Calu3 (cell line): ENCODE measurements at regions of chr5 and their contacts with region 1.

Region 1: DNA sequence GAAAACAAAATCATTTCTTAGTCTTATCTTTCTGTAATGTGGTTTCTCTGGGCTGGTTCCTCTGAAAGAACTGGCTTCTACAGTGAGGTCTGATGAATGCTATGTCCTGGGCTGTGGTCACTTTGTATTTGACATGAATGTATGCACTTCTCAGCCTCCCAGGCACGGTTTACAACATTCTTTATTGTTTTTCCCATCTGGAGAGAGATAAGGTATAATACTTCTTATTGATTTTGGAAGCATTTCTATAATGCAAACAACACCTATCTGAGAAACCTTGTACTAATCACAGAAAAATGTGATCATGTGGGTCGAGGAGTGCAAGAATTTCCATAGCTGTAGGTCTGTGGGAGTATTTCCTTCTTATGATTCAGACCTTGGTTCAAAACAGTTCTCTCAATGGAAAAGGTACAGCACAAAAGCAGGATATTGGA is 46.9 kb downstream of the ACTBL2 start:
- DNase-seq: peak; percentile 60
- H3K4me3 Mint-ChIP-seq: peak overlapping the region; percentile 10
- H3K27ac Mint-ChIP-seq: peak overlapping the region; percentile 87
- H3K4me1 Mint-ChIP-seq: peaks cover 57% of the 10 kb centered on the region
- H3K27me3 Mint-ChIP-seq: no peaks in the 10 kb centered on the region
- CTCF ChIP-seq: no peak

Region 2: GRCh38 chr5:57338068-57338892 is 97.4 kb before region 1 on chr5:
- CTCF ChIA-PET with region 1: interaction called, 4 read pairs
- intact Hi-C with region 1: loop called (anchors 2 kb)
- DNase-seq: peak; percentile 50
- H3K4me3 Mint-ChIP-seq: no peak overlapping the region
- H3K27ac Mint-ChIP-seq: peak overlapping the region; percentile 33
- H3K4me1 Mint-ChIP-seq: peaks cover 12% of the 10 kb centered on the region
- H3K27me3 Mint-ChIP-seq: no peaks in the 10 kb centered on the region
- CTCF ChIP-seq: peak; percentile 72

Region 3: DNA sequence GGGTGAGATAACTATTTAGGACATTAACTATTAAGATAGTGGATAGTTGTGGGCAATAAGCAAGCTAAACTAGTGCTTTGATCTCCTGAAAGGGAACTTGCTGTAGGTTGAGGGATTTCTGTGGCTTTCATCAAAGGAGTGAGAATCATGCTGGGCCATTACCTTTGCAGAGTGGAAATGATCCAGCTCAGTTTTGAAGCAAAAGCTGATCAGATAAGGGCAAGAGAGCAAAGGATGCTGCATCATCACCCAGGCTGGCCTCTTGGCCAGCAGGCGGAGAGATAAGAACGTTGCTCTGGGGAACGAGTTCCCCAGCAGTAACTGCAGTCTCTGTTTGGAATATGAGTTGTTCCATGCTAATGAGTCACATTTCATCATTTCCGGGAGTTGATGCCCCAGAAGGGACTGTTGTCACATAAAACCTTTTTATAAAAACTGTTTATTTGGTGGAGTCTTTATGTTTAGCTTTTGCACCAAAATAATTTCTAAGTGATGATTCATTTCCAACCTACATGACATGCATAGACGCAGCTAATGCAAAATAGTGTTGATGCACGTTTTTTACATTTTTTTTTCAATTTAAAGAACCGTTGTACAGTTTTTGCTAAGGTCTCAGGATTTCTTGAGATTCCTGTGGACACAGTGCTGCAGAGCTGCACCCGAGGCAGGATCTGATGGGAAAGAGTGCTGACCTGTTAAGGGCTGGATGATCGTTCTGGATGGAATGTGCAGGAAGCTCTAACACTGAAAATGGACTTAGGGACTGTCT is 52.4 kb before region 1 on chr5:
- CTCF ChIA-PET with region 1: no interaction called
- intact Hi-C with region 1: loop called (anchors 5 kb)
- DNase-seq: peak; percentile 49
- H3K4me3 Mint-ChIP-seq: peak overlapping the region; percentile 8
- H3K27ac Mint-ChIP-seq: peak overlapping the region; percentile 45
- H3K4me1 Mint-ChIP-seq: peaks cover 23% of the 10 kb centered on the region
- H3K27me3 Mint-ChIP-seq: no peaks in the 10 kb centered on the region
- CTCF ChIP-seq: peak; percentile 27

Region 4: DNA sequence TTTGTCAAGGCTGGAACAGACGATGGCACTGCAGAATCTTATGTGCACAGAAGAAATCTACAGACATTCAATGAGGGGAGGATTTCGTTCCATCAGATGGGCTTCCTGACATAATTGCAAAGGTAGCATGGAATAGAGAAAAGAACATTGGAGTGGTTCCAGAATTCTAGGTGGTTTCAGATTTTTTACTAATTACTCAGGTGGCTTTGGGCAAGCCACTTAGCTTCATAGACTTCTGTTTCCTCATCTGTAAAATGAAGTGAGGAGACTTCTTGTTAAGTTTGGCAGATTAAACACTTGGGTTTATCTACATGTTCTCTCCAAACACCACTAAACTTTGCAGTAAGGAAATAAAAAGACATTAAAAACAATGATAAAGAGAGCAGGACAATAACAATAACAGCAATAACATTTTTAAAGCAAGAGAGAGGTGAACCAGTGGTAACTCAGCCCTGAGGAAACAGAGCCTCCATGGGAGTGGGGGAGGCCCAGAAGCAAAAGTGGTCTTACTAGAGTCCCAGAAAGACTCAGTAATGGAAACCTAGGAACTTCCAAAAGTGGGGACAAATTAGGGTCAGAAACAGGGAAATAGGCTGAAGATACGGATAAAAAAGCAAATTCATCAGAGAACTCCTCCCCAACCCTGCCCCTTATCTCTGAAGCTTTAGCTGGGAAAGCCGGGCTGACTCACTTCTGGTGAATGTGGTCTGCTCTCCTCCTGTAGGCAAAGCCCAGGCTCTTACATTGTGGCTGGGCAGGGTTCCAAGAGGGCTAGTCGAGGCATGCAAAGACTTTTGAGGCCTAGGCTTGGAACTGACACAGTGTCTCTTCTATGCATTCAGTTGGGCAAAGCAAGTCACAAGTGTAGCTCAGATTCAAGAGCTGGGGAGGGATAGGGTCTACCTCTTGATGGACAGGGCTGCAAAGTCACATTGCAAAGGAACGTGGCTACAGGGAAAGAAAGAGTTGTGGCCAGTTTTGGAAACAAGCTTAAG is 58.7 kb after region 1 on chr5:
- CTCF ChIA-PET with region 1: interaction called, 7 read pairs
- intact Hi-C with region 1: loop called (anchors 1 kb)
- DNase-seq: peak; percentile 93
- H3K4me3 Mint-ChIP-seq: peak overlapping the region; percentile 51
- H3K27ac Mint-ChIP-seq: peak overlapping the region; percentile 96
- H3K4me1 Mint-ChIP-seq: peaks cover 69% of the 10 kb centered on the region
- H3K27me3 Mint-ChIP-seq: no peaks in the 10 kb centered on the region
- CTCF ChIP-seq: no peak

Region 5: GRCh38 chr5:57825031-57825683 is 389.4 kb after region 1 on chr5:
- CTCF ChIA-PET with region 1: no interaction called
- intact Hi-C with region 1: loop called (anchors 10 kb)
- DNase-seq: peak; percentile 47
- H3K4me3 Mint-ChIP-seq: peak overlapping the region; percentile 24
- H3K27ac Mint-ChIP-seq: peak overlapping the region; percentile 80
- H3K4me1 Mint-ChIP-seq: peaks cover 40% of the 10 kb centered on the region
- H3K27me3 Mint-ChIP-seq: no peaks in the 10 kb centered on the region
- CTCF ChIP-seq: no peak